MCF 10A (cell line): ENCODE measurements at regions of chr13 and their contacts with region 1.

Region 1: GRCh38 chr13:76250211-76250610 is 614.1 kb downstream of the LMO7 start:
- DNase-seq: no peak
- H3K4me3 Mint-ChIP-seq: no peak overlapping the region
- H3K27ac Mint-ChIP-seq: no peak overlapping the region
- H3K4me1 Mint-ChIP-seq: no peaks in the 10 kb centered on the region
- H3K27me3 Mint-ChIP-seq: no peaks in the 10 kb centered on the region
- CTCF ChIP-seq: no peak

Region 2: DNA sequence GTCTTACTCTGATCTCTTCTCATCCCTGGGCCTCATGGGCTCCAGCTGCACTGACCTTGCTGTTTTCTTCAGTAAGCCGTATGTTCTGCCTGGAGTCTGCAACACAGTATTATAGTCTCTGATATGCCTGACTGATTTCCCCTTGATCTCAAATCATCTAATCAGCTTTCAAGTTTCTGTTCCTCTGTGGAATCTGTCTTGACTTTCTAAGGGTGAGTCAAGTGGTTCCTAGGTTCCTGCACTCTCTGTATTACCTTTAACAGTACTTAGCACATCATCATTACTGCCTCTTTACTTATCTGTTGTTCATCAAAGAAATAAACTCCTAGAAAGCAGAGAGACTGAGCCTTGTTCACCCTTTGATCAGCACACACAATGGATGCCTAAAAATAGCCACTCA is 263.4 kb before region 1 on chr13:
- CTCF ChIA-PET with region 1: no interaction called
- POLR2A ChIA-PET with region 1: no interaction called
- intact Hi-C with region 1: no loop called
- DNase-seq: no peak
- H3K4me3 Mint-ChIP-seq: no peak overlapping the region
- H3K27ac Mint-ChIP-seq: no peak overlapping the region
- H3K4me1 Mint-ChIP-seq: no peaks in the 10 kb centered on the region
- H3K27me3 Mint-ChIP-seq: no peaks in the 10 kb centered on the region
- CTCF ChIP-seq: no peak

Region 3: GRCh38 chr13:76307142-76307541 is 56.9 kb after region 1 on chr13:
- CTCF ChIA-PET with region 1: no interaction called
- POLR2A ChIA-PET with region 1: no interaction called
- intact Hi-C with region 1: loop called (anchors 10 kb)
- DNase-seq: no peak
- H3K4me3 Mint-ChIP-seq: no peak overlapping the region
- H3K27ac Mint-ChIP-seq: no peak overlapping the region
- H3K4me1 Mint-ChIP-seq: no peaks in the 10 kb centered on the region
- H3K27me3 Mint-ChIP-seq: no peaks in the 10 kb centered on the region
- CTCF ChIP-seq: no peak